GM12878 (cell line): ENCODE measurements at regions of chr10 and their contacts with region 1.

Region 1: DNA sequence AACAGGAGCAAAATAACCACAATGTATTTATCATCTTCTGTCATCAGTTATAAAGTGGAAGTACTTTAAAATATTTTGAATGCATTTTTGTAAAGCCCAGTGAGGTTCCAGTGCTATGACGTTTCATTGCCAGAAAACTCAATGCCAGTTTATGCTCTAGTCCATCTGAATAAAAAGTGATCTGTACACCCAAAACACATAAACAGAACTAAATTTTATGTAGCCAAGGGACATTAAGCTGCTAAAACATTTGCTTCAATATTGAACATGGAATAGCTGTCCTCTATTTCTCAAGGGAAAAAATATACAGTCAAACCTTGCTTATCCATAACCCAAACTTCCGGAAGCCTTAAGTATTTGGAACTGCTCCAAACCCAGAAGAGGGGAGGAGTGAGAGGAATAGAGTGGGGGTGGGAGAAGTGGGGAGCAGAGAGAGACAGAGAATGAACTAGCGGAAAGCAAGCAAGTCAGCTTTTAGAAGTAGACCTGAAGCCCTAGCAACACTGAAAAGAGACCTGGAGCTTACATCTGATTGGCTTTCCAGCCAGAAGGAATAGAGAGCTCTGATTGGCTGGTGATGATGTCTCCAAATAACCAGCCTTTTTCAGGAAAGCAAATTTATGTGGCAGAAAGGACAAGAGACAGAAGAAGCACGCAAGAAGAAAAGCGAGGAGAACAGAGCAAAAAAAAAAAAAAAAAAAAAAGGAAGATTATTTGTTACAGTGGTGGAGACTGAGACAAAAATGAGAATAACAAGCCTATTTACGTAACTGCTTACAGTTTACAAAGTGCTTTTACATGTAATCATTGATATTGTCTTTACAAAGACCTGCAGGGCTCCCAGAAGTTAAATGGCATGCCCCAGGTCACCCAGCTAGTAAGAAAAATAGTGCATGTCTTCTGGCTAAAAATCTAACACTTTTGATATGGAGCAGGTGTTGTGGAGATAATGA is 196.0 kb downstream of the RNLS start:
- DNase-seq: peak; percentile 80
- ATAC-seq: peak; percentile 82
- H3K4me3 ChIP-seq: peak overlapping the region; percentile 48
- H3K27ac ChIP-seq: peak overlapping the region; percentile 99
- H3K4me1 ChIP-seq: peaks cover 63% of the 10 kb centered on the region
- H3K27me3 ChIP-seq: no peaks in the 10 kb centered on the region
- CTCF ChIP-seq: no peak
- EP300 ChIP-seq: 0 out of 4 replicates have a peak, but pooled peaks of 1 of the 2 experiments have one; percentile 37
- POLR2A ChIP-seq: no peak; the same call in none of the 2 replicates
- RAD21 ChIP-seq: no peak

Region 2: DNA sequence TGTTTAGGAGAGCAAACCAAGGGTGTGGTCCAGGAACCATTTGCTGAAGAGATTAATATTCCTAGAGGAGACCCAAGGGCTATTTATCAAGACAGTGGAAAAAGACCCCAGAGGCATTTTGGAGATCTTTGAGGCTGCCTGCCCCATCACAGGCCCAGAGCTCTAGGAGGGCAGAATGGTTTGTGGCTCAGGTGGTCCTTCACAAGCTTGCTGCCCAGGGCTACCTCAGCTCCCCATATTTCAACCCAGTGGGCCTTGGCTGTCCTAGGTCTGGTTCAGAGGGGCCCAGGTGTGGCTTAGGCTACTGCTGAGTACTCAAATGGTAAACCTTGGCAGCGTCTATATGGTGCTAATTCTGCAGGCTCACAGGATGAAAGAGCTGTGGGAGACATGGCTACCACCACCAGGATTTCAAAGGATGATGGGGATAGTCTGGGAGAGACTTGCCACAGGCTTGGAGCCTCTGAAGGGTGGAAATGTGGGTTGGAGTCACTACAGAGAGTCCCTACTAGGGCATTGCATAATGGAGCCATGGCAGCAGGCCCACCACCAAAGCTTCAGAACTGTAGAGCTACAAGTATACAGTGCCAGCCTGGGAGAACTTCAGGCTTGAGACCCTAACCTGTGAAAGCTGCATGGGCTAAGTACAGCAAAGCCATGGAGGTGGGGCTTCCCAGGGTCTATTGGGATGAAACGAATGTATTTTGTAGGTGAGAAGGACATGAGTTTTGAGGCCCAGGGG is 499.4 kb before region 1 on chr10:
- CTCF ChIA-PET with region 1: interaction called, 3 read pairs
- POLR2A ChIA-PET with region 1: no interaction called
- RAD21 ChIA-PET with region 1: no interaction called
- SMC1A ChIA-PET with region 1: interaction called, 11 read pairs
- in situ Hi-C with region 1: no loop called
- intact Hi-C with region 1: no loop called
- DNase-seq: no peak
- ATAC-seq: peak; percentile 23
- H3K4me3 ChIP-seq: no peak overlapping the region
- H3K27ac ChIP-seq: no peak overlapping the region
- H3K4me1 ChIP-seq: peaks cover under 1% of the 10 kb centered on the region
- H3K27me3 ChIP-seq: no peaks in the 10 kb centered on the region
- CTCF ChIP-seq: no peak
- EP300 ChIP-seq: no peak
- POLR2A ChIP-seq: no peak; the same call in 1 of the 2 replicates
- RAD21 ChIP-seq: no peak

Region 3: GRCh38 chr10:88091490-88092105 is 295.5 kb before region 1 on chr10:
- CTCF ChIA-PET with region 1: interaction called, 41 read pairs
- POLR2A ChIA-PET with region 1: no interaction called
- RAD21 ChIA-PET with region 1: interaction called, 46 read pairs
- SMC1A ChIA-PET with region 1: interaction called, 56 read pairs
- in situ Hi-C with region 1: no loop called
- intact Hi-C with region 1: loop called (anchors 1 kb)
- DNase-seq: peak; percentile 98
- ATAC-seq: peak; percentile 88
- H3K4me3 ChIP-seq: 0 out of 2 replicates have a peak overlapping the region, but pooled peaks have one; percentile 20
- H3K27ac ChIP-seq: peak overlapping the region; percentile 97
- H3K4me1 ChIP-seq: peaks cover 31% of the 10 kb centered on the region
- H3K27me3 ChIP-seq: no peaks in the 10 kb centered on the region
- CTCF ChIP-seq: peak in 1 of 3 experiments; percentile 23; a peak in 1 of 6 replicates
- EP300 ChIP-seq: peak; percentile 92 to 94
- POLR2A ChIP-seq: no peak
- RAD21 ChIP-seq: peak; percentile 51

Region 4: DNA sequence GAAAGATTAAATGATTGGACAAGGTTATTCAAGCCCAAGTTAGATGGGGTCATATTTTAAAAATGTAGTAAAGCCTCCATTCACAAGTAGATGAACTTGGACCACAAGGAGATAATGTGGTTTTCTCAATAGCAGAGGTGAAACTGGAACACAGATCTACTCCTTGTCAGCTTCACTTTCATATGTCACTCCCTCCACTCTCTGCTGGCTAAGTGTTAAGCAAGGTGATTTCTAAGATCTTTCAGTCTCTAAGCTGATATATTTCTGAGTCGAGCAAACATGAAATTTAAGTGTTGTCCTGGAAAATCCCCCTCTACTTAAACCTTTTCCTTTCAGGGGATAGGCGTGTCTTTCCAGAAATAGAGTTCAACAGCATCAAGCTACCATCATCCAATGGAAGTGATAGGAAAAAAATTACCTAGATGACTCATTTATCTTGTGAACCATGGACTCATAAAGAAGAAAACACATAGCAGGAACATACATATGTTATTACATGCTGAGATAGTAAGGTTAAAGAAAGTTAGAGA is 248.7 kb before region 1 on chr10:
- CTCF ChIA-PET with region 1: interaction called, 9 read pairs
- POLR2A ChIA-PET with region 1: no interaction called
- RAD21 ChIA-PET with region 1: interaction called, 15 read pairs
- SMC1A ChIA-PET with region 1: interaction called, 8 read pairs
- in situ Hi-C with region 1: no loop called
- intact Hi-C with region 1: no loop called
- DNase-seq: peak; percentile 74
- ATAC-seq: peak; percentile 97
- H3K4me3 ChIP-seq: no peak overlapping the region
- H3K27ac ChIP-seq: peak overlapping the region; percentile 16
- H3K4me1 ChIP-seq: peaks cover 16% of the 10 kb centered on the region; the same call in 1 of the 2 replicates
- H3K27me3 ChIP-seq: no peaks in the 10 kb centered on the region
- CTCF ChIP-seq: no peak
- EP300 ChIP-seq: peak in 1 of 2 experiments; percentile 72; a peak in 3 of 4 replicates
- POLR2A ChIP-seq: no peak
- RAD21 ChIP-seq: no peak

Region 5: GRCh38 chr10:88260329-88261051 is 126.6 kb before region 1 on chr10:
- CTCF ChIA-PET with region 1: no interaction called
- POLR2A ChIA-PET with region 1: no interaction called
- RAD21 ChIA-PET with region 1: interaction called, 6 read pairs
- SMC1A ChIA-PET with region 1: interaction called, 13 read pairs
- in situ Hi-C with region 1: no loop called
- intact Hi-C with region 1: no loop called
- DNase-seq: no peak
- ATAC-seq: peak; percentile 76
- H3K4me3 ChIP-seq: no peak overlapping the region
- H3K27ac ChIP-seq: peak overlapping the region; percentile 42; the same call in 1 of the 2 replicates
- H3K4me1 ChIP-seq: peaks cover 27% of the 10 kb centered on the region
- H3K27me3 ChIP-seq: no peaks in the 10 kb centered on the region
- CTCF ChIP-seq: no peak
- EP300 ChIP-seq: no peak
- POLR2A ChIP-seq: no peak
- RAD21 ChIP-seq: no peak

Region 6: GRCh38 chr10:88315755-88316154 is 71.3 kb before region 1 on chr10:
- CTCF ChIA-PET with region 1: interaction called, 13 read pairs
- POLR2A ChIA-PET with region 1: no interaction called
- RAD21 ChIA-PET with region 1: interaction called, 12 read pairs
- SMC1A ChIA-PET with region 1: interaction called, 61 read pairs
- in situ Hi-C with region 1: no loop called
- intact Hi-C with region 1: no loop called
- DNase-seq: no peak
- ATAC-seq: no peak
- H3K4me3 ChIP-seq: no peak overlapping the region
- H3K27ac ChIP-seq: no peak overlapping the region
- H3K4me1 ChIP-seq: no peaks in the 10 kb centered on the region
- H3K27me3 ChIP-seq: no peaks in the 10 kb centered on the region
- CTCF ChIP-seq: no peak
- EP300 ChIP-seq: no peak
- POLR2A ChIP-seq: no peak
- RAD21 ChIP-seq: no peak

Region 7: GRCh38 chr10:88541116-88541626 is 154.1 kb after region 1 on chr10:
- CTCF ChIA-PET with region 1: no interaction called
- POLR2A ChIA-PET with region 1: no interaction called
- RAD21 ChIA-PET with region 1: no interaction called
- SMC1A ChIA-PET with region 1: no interaction called
- in situ Hi-C with region 1: no loop called
- intact Hi-C with region 1: no loop called
- DNase-seq: no peak
- ATAC-seq: no peak
- H3K4me3 ChIP-seq: no peak overlapping the region
- H3K27ac ChIP-seq: no peak overlapping the region
- H3K4me1 ChIP-seq: peaks cover 7% of the 10 kb centered on the region
- H3K27me3 ChIP-seq: no peaks in the 10 kb centered on the region
- CTCF ChIP-seq: no peak
- EP300 ChIP-seq: no peak
- POLR2A ChIP-seq: no peak
- RAD21 ChIP-seq: no peak

Region 8: GRCh38 chr10:88553116-88553752 is 166.1 kb after region 1 on chr10:
- CTCF ChIA-PET with region 1: interaction called, 28 read pairs
- POLR2A ChIA-PET with region 1: no interaction called
- RAD21 ChIA-PET with region 1: interaction called, 5 read pairs
- SMC1A ChIA-PET with region 1: interaction called, 4 read pairs
- in situ Hi-C with region 1: no loop called
- intact Hi-C with region 1: loop called (anchors 1 kb)
- DNase-seq: peak; percentile 45
- ATAC-seq: peak; percentile 99
- H3K4me3 ChIP-seq: no peak overlapping the region
- H3K27ac ChIP-seq: no peak overlapping the region; the same call in 1 of the 2 replicates
- H3K4me1 ChIP-seq: 0 out of 2 replicates have a peak, but pooled peaks cover 5% of the 10 kb centered on the region
- H3K27me3 ChIP-seq: no peaks in the 10 kb centered on the region
- CTCF ChIP-seq: peak; percentile 84 to 94 (median 90)
- EP300 ChIP-seq: no peak
- POLR2A ChIP-seq: no peak
- RAD21 ChIP-seq: peak; percentile 97